ENCODE measurements at regions of chr16 and their contacts with region 1.

Region 1: DNA sequence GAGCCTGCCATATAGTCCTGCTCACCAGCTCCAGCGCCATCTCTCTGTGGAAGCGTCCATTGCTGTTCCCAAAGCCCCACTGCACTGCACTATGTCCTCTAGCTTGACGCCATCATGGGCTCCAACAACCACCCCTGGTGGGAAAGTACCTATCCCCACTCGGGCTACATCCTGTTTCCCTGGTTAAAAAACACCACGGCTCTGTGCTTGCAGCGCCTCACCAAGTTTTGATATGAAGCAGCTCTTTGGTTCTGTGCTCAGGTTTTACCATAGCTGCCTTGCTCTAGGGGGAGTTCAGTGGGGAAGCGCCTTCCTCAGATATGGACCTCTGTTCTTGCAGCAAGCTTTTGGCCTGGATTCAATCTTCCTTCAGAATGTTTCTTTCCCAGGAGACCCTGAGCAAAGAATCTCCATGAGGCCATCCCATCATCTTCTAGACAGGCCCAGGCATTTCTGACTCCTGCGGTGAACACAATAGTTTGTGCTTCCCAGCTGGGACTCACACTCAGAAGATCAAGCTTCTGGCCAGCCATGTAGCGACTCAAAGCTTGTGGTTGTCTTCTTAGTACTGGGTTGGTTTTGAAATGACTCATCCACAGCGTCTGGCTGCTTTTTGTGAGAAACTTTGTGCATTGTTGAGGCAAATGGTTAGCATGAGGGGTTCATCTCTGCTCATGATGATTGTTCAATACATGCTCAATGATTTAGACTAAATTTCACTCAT is 39.5 kb downstream of the DYNLRB2 start:
- DNase-seq: peak; percentile 94
- H3K4me3 Mint-ChIP-seq: peak overlapping the region; percentile 80
- H3K27ac Mint-ChIP-seq: peak overlapping the region; percentile 96
- H3K4me1 Mint-ChIP-seq: peaks cover 58% of the 10 kb centered on the region
- H3K27me3 Mint-ChIP-seq: no peaks in the 10 kb centered on the region

Region 2: DNA sequence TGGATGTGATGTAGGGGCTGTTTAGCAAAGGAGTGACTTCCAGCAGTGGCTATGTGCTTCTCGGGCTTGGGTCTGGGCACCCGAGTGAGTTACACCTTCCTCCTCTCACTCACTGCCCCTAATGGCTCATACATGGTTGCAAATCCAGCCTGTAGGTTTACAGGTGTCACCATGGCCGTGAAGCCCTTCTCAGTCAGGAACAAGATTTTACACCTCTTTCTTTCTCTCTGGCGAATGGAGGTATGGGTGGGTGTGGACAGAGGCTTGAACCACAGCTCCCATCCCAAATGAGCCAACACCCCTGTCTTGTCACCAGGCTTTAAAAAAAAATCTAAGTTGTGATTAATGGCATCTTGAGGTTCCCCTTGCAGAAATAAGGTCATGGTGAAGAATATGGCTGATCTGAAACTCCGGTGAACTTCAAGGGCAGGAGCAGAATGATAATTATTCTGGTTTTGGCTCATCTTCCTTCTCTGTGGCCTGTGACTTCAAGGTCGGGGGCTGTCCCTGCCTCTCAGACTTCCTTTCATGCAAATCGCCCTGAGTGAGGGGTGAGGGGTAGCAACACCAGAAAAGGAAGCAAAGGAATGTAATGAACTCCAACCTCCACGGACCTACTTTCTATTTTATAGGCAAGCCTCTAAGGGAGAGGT is 1310.9 kb before region 1 on chr16:
- intact Hi-C with region 1: loop called (anchors 2 kb)
- DNase-seq: peak; percentile 88
- H3K4me3 Mint-ChIP-seq: peak overlapping the region; percentile 56
- H3K27ac Mint-ChIP-seq: peak overlapping the region; percentile 86
- H3K4me1 Mint-ChIP-seq: peaks cover 74% of the 10 kb centered on the region
- H3K27me3 Mint-ChIP-seq: peaks cover 9% of the 10 kb centered on the region

Region 3: GRCh38 chr16:80477838-80478237 is 102.4 kb before region 1 on chr16:
- intact Hi-C with region 1: no loop called
- DNase-seq: no peak
- H3K4me3 Mint-ChIP-seq: no peak overlapping the region
- H3K27ac Mint-ChIP-seq: no peak overlapping the region
- H3K4me1 Mint-ChIP-seq: no peaks in the 10 kb centered on the region
- H3K27me3 Mint-ChIP-seq: peaks cover 15% of the 10 kb centered on the region

Region 4: DNA sequence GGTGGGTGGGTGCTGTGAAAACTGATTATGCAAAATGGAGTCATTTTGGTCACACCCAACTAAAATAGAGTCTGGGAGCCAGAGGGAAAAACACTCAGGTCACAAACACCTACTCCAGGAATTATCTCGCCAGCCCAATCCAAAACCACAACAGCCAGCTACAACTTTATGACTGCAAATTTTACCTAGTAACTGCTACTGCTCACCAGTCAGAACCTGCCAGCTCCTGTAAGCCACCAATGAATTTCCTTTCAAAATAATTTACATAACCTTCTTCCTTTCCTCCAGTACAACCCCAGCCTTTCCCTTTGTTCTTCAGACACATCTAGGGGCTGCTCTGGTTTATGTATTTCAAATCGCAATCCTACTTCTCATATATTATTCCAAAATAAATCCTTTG is 92.1 kb before region 1 on chr16:
- intact Hi-C with region 1: no loop called
- DNase-seq: no peak
- H3K4me3 Mint-ChIP-seq: no peak overlapping the region
- H3K27ac Mint-ChIP-seq: no peak overlapping the region
- H3K4me1 Mint-ChIP-seq: peaks cover 5% of the 10 kb centered on the region
- H3K27me3 Mint-ChIP-seq: peaks cover 13% of the 10 kb centered on the region

Region 5: DNA sequence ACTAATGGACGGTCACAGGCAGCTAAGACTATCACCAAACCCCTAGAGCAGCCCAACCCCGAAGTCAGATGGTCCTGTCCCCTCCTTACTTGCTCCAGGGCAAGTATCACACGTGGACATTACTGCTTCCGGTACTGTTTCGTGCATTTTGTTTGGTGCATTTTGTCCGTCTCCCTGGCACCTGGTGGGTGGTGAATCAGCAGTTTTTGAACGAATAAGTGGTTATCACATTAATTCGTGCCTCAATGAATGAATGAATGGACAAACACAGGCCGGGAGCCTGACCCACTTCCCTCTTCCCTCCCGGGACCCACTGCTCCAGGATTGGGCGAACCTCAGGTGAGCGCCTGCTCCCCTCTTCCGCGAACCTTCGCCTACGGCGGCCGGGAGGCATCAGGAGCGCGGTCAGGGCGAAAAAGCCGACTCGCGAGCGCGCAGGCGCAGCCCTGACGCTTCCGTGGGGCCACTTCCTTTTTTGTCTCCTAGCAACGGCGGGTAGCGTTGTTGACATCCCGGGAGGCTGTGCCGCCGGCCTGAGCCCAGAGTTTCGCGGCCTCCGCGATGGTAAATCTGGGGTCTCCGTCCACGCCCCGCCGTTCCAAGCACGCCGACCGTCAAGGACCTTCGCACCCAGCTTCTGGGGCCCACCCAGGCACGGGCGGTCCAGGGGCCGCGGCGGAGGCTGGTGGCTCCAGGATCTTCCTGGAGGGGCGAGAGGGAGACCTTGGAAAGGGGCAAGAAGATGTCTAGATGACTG is 39.6 kb before region 1 on chr16 and contains the start of gene DYNLRB2:
- intact Hi-C with region 1: loop called (anchors 1 kb)
- DNase-seq: peak; percentile 98
- H3K4me3 Mint-ChIP-seq: peak within 1 kb of the TSS; percentile 96
- H3K27ac Mint-ChIP-seq: peak within 1 kb of the TSS; percentile 98
- H3K4me1 Mint-ChIP-seq: peaks cover 32% of the 10 kb centered on the region
- H3K27me3 Mint-ChIP-seq: peaks cover 9% of the 10 kb centered on the region
- total RNA-seq, gene DYNLRB2: not detected in 2 replicates

Region 6: GRCh38 chr16:80656711-80657150 is 76.5 kb after region 1 on chr16:
- intact Hi-C with region 1: loop called (anchors 1 kb)
- DNase-seq: peak; percentile 86
- H3K4me3 Mint-ChIP-seq: peak overlapping the region; percentile 85
- H3K27ac Mint-ChIP-seq: peak overlapping the region; percentile 94
- H3K4me1 Mint-ChIP-seq: peaks cover 31% of the 10 kb centered on the region
- H3K27me3 Mint-ChIP-seq: no peaks in the 10 kb centered on the region

Region 7: DNA sequence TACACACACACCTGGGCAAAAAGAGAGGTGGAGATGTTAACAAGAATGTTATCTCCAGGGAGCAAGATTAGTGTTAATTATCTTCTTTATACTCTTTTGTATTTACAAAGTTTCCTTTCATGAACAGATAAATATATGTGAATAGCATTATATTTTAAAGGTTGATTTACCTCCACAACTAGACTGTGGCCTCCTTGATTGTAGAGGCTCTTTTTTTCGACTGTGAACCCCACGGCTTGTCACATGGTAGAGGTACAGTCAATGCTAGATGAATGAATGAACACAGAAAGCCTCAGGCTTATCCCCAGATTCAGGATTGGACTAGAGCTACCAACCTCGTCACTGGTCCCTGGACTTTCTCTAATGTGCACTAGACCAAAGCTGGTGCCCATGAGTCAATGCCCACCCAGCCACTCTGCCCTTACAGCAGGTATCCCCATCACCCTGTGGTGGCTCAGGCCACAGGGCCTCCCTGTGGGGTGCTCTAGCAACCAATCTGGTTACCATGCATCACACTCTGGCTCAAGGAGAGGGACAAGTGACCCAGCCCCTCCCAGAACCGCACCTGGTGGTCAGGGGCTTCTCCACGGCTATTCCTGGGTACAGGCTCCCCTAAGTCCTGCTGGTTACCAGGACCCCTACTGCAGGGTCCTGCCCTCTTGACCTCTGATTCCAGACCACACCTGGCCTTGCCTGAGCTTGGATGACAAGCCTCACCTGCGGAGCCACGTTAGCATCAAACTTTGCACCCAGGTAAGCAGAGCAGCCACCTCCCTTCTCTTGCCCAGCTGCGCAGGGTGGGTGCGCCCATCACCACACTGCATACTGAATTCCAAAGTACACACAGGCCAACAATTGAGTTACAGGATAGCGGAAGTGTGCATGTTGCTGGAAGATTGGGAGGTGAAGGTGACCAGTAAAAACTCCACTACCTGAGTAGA is 123.1 kb after region 1 on chr16:
- intact Hi-C with region 1: no loop called
- DNase-seq: no peak
- H3K4me3 Mint-ChIP-seq: no peak overlapping the region
- H3K27ac Mint-ChIP-seq: no peak overlapping the region
- H3K4me1 Mint-ChIP-seq: peaks cover 27% of the 10 kb centered on the region
- H3K27me3 Mint-ChIP-seq: no peaks in the 10 kb centered on the region

Region 8: DNA sequence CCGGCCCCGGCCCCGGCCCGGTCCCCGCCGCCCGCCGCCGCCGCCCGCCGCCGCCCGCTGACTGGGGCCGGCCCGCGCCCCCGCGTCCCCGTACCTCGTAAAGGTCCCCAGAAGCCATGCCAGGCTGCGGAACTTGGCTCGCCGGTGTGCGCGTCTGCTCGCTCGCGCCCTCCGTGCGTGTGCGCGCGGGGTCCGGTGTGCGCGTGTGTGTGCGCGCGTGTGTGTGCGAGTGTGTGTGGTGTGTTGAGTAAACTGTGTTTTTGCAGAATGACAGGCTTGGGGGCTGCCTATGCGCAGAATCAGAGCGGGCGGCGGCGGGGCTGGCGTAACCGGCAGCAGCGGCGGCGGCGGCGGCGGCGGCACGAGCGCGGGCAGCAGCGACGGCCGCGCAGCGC is 223.8 kb after region 1 on chr16:
- intact Hi-C with region 1: loop called (anchors 1 kb)
- DNase-seq: peak; percentile 89
- H3K4me3 Mint-ChIP-seq: peak overlapping the region; percentile 93
- H3K27ac Mint-ChIP-seq: peak overlapping the region; percentile 97
- H3K4me1 Mint-ChIP-seq: peaks cover 45% of the 10 kb centered on the region
- H3K27me3 Mint-ChIP-seq: no peaks in the 10 kb centered on the region

Measured in activated CD4-positive, alpha-beta T cell treated with anti-CD3 and anti-CD28 coated beads, Interleukin-2, amount 10 ng/mL, durations not matched to agents 24 days and 14 days (primary cell).